HEK293 (cell line): ENCODE measurements at regions of chr6 and their contacts with region 1.

Region 1: DNA sequence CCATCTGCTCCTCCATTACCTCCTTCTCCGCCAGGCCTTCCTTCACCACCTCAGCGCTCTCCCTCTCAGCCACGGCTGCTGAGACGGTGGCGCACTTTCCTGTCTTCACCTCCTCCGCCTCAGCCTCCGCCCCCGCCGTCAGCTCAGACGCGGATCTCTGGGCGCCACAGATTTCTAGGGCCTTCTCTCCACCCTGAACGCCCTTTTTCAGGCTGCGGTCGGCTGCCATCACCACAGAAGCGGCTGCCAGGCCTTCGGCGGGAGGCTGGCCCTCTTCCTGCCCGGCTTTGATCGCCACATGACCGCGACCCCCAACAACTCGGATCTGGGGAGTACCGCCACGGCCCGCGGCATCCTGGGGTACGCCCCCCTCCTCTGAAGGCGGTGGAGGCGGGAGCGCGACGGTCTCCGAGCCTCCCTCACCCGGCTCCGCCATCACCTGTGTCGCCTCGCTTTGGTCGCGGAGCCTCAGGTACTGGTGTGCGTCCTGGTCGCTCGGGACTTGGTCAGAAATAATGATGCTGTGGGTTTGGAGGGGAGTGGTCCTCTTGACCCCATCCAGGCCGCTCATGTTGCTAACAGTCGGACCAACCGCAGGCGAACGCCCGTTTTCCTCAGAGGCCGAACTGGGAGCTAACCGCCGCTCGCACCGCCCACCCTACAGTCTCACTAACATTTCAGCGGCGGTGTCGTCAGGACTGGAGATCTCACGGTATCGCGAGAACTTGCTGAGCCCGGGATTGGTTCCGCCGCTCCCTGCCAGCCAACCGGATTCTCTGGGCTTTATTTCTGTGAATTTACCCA is at the start of gene TSPYL1:
- H3K4me3 ChIP-seq: peak within 1 kb of the TSS; percentile 97
- H3K27ac ChIP-seq: peak within 1 kb of the TSS; percentile 94
- H3K4me1 ChIP-seq: peaks cover 4% of the 10 kb centered on the region; the same call in 1 of the 2 replicates
- CTCF ChIP-seq: peak; percentile 87

Region 2: GRCh38 chr6:116020738-116021137 is 258.7 kb before region 1 on chr6:
- CTCF ChIA-PET with region 1: no interaction called
- POLR2A ChIA-PET with region 1: interaction called, 11 read pairs
- H3K4me3 ChIP-seq: no peak overlapping the region
- H3K27ac ChIP-seq: no peak overlapping the region
- H3K4me1 ChIP-seq: peaks cover 12% of the 10 kb centered on the region; the same call in 1 of the 2 replicates
- CTCF ChIP-seq: no peak

Region 3: DNA sequence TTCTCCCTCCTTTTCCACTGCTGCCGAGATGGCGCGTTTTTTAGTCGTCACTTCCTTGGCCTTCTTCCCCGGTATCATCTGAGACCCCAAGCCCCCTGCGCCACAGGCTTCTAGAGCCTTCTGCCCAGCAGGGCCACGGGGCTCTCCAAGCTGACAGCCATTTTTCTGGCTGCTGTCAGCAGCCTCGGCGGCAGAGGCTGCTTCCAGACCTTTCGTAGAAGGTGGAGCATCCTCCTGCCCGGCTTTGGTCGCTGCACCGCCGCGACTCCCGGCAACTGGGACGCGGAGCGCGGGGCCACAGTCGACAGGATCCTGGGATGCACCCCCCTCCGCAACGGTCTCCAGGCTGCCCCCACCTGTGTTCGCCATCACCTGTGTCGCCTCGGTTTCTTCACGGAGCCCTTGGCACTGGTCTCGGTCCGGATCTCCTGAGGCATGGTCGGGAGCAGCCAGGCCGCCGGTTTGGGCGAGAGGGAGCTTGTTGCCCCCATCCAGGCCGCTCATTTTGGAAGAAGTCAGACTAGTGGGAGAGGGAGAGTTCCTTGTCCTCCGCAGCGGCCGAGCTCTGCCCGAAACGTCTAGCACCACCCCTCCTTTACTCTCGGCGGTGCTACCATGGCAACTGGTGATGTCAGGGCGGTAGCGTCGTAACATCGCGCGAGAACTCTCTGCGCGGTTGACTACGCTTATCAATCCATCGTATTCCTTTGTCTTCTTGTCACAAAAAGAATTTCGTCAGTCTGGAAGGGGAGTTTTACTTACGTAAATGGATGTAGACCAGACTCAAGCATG is 25.8 kb before region 1 on chr6 and contains the start of gene TSPYL4:
- CTCF ChIA-PET with region 1: no interaction called
- POLR2A ChIA-PET with region 1: interaction called, 16 read pairs
- H3K4me3 ChIP-seq: peak within 1 kb of the TSS; percentile 88
- H3K27ac ChIP-seq: peak within 1 kb of the TSS; percentile 69
- H3K4me1 ChIP-seq: peaks cover 11% of the 10 kb centered on the region; the same call in 1 of the 2 replicates
- CTCF ChIP-seq: 0 out of 2 replicates have a peak, but pooled peaks have one; percentile 12

Region 4: DNA sequence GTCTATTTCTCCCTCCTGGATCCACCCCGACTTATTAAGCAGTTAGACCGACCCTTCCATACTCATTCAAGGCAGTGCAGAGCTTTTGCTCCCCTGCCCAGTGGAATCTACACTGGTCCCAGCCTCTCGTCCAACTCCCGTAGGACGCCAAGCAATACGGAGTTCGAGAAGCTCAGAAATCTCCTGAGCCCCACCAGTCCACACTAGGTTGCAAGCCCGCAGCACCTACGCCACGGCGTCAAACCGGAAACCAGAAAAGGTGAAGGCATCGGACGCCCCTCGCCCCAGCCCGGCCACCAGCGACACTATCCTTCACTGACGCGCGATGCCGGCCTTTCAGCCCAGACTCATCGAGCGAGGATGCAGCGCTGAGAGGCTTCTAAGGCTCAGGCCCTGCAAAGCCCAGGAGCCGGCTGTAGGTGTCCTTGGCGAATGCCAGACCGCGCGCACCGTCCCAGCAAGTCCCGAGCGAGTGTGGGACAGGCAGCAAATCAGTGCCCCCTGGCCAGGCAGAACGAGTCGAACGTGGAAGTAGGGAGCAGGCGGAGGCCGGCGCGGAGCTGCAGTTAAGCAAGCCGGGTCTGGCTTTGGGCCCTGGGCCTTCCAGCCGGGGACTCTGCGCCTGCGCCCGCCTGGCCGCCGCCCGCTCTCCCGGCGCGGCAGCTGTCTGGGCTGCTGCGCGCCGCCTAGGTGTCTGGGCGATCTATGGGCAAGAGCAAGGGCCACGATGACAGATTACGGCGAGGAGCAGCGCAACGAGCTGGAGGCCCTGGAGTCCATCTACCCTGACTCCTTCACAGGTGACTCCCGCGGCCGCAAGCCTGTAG is 291.6 kb after region 1 on chr6 and contains the start of gene RWDD1:
- CTCF ChIA-PET with region 1: no interaction called
- POLR2A ChIA-PET with region 1: interaction called, 27 read pairs
- H3K4me3 ChIP-seq: peak within 1 kb of the TSS; percentile 96
- H3K27ac ChIP-seq: peak within 1 kb of the TSS; percentile 85
- H3K4me1 ChIP-seq: peaks cover 2% of the 10 kb centered on the region; the same call in 1 of the 2 replicates
- CTCF ChIP-seq: peak; percentile 40; the same call in 1 of the 2 replicates